Activated CD4-positive, alpha-beta T cell treated with anti-CD3 and anti-CD28 coated beads, Interleukin-2, amount 10 ng/mL, durations not matched to agents 24 days and 14 days (primary cell): ENCODE measurements at regions of chr16 and their contacts with region 1.

Region 1: GRCh38 chr16:68843482-68844210 is at the start of gene TANGO6:
- DNase-seq: peak; percentile 97
- H3K4me3 Mint-ChIP-seq: peak within 1 kb of the TSS; percentile 87
- H3K27ac Mint-ChIP-seq: peak within 1 kb of the TSS; percentile 95
- H3K4me1 Mint-ChIP-seq: peaks cover 20% of the 10 kb centered on the region
- H3K27me3 Mint-ChIP-seq: no peaks in the 10 kb centered on the region
- total RNA-seq, gene TANGO6: 35.6 and 40.0 TPM in 2 replicates

Region 2: GRCh38 chr16:68448360-68448970 is 395.2 kb before region 1 on chr16 and contains the start of gene SMPD3:
- intact Hi-C with region 1: loop called (anchors 5 kb)
- DNase-seq: peak; percentile 99
- H3K4me3 Mint-ChIP-seq: peak within 1 kb of the TSS; percentile 77
- H3K27ac Mint-ChIP-seq: peak within 1 kb of the TSS; percentile 60
- H3K4me1 Mint-ChIP-seq: peaks cover 11% of the 10 kb centered on the region
- H3K27me3 Mint-ChIP-seq: peaks cover 29% of the 10 kb centered on the region
- total RNA-seq, gene SMPD3: 0.09 and 0.40 TPM in 2 replicates

Region 3: GRCh38 chr16:68756250-68756915 is 87.3 kb before region 1 on chr16:
- intact Hi-C with region 1: loop called (anchors 2 kb)
- DNase-seq: peak; percentile 86
- H3K4me3 Mint-ChIP-seq: peak overlapping the region; percentile 45
- H3K27ac Mint-ChIP-seq: peak overlapping the region; percentile 99
- H3K4me1 Mint-ChIP-seq: peaks cover 54% of the 10 kb centered on the region
- H3K27me3 Mint-ChIP-seq: no peaks in the 10 kb centered on the region

Region 4: GRCh38 chr16:69123910-69124309 is 280.3 kb after region 1 on chr16:
- intact Hi-C with region 1: loop called (anchors 2 kb)
- DNase-seq: peak; percentile 90
- H3K4me3 Mint-ChIP-seq: no peak overlapping the region
- H3K27ac Mint-ChIP-seq: no peak overlapping the region
- H3K4me1 Mint-ChIP-seq: peaks cover 11% of the 10 kb centered on the region
- H3K27me3 Mint-ChIP-seq: no peaks in the 10 kb centered on the region

Region 5: DNA sequence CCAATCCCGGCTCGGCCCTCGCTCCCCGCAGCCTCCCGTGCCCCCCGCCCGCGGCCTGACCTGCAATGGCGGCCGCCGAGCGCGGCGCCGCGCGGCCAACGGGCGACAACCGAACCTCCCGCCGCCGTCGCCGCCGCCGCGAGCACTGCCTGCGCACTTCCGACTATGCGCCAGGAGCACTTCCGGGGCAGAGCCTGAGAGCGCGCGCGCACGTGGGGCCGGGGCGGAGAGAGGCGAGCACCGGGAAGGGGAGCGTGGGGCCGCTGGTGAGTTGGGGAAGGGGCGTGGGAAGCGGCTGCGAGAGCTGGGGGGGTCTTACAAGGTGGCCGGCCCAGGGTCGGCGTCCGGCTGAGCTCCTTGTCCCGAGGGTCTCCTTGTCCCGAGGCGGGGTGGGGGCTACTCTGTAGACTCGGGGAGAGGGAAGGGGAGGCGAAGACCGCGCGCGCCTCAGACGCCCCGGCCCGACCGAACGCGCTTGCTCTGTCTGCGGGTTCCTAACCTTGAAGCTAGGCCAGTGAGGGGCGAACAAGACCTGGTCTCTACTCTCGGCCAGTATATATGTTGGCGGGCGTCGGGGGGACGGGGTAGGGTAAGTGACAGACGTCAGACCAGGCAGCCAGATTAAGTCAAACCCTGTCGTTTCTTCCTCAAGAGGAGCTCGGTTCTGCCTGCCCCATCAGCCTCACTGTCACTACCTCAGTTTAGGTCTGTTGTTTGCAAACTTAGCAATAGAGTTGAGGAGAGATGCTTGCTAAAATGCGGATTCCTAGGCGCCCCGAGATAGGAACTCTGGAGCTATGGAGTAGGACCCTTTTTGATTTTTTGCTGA is 289.0 kb after region 1 on chr16 and contains the starts of genes CHTF8 and UTP4:
- intact Hi-C with region 1: loop called (anchors 2 kb)
- DNase-seq: peak; percentile 97
- H3K4me3 Mint-ChIP-seq: peak within 1 kb of the TSS; percentile 90
- H3K27ac Mint-ChIP-seq: peak within 1 kb of the TSS; percentile 93
- H3K4me1 Mint-ChIP-seq: peaks cover 50% of the 10 kb centered on the region
- H3K27me3 Mint-ChIP-seq: no peaks in the 10 kb centered on the region
- total RNA-seq, gene CHTF8: 124 and 138 TPM in 2 replicates
- total RNA-seq, gene UTP4: 126 and 131 TPM in 2 replicates

Region 6: DNA sequence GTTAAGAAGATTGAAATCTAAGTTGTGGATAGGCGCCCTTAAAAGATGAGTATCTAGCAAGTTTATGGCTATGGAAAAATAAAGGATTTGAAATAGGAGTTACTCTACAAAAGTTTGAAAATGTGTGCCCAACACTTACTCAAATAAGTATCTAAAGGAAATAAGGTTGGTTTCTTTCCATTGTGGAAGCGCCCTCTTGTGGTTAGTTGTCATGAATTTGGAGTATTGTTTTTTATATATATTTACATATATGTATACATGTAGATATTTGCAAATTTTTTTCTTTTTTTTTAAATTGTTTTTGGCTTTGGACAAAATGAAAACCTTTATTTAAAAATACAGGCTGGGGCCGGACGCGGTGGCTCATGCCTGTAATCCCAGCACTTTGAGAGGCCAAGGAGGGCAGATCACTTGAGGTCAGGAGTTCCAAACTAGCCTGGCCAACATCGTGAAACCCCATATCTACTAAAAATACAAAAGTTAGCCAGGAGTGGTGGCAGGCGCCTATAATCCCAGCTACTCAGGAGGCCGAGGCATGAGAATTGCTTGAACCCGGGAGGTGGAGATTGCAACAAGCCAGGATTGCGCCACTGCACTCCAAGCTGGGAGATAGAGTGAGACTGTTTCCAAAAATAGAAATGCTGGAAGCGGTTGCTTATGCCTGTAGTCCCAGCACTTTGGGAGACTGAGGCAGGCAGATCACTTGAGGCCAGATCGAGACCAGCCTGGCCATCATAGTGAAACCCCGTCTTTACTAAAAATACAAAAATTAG is 443.5 kb after region 1 on chr16:
- intact Hi-C with region 1: loop called (anchors 2 kb)
- DNase-seq: peak; percentile 84
- H3K4me3 Mint-ChIP-seq: no peak overlapping the region
- H3K27ac Mint-ChIP-seq: no peak overlapping the region
- H3K4me1 Mint-ChIP-seq: no peaks in the 10 kb centered on the region
- H3K27me3 Mint-ChIP-seq: no peaks in the 10 kb centered on the region

Region 7: DNA sequence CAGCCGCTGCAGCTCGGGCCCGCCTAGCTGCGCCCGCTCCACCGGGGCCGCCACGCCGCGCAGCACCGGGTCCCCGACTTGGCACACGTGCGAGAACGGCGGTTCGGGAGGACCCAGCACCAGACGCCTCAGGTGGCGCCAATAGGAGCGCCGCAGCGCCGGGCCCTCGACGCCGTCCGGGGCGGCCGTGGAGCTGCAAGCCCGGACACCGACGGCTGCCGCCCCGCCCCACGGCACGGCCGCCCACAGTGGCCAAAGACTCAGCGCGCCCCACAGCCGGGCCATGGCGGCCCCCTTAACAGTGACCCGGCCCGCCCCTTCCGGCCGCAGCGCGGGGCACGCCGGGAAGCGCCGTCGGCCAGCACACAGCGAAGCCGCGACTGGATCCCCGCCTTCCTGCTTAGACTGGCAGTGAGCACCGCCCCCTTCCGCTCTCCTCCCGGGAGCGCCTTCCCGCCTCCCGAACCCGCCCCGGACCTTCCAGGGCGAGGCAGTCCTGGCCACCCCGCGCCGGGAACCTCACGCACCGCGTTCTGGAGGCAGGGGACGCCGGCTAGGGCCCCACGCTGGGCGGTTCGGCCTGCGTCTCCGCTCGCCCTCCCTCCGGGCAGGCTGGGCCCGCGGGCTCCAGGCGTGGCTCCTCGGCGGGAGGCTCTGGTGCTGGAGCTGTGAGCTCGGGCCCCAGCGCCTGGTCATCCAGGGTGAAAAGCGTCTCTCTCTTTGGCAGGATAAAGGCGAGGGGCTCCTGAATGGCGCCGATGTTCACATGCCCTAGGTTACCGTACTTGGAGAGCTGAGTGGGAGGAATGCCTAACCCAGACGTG is 486.9 kb after region 1 on chr16 and contains the start of gene PDF:
- intact Hi-C with region 1: no loop called
- DNase-seq: peak; percentile 97
- H3K4me3 Mint-ChIP-seq: peak within 1 kb of the TSS; percentile 90
- H3K27ac Mint-ChIP-seq: peak within 1 kb of the TSS; percentile 89
- H3K4me1 Mint-ChIP-seq: peaks cover 32% of the 10 kb centered on the region
- H3K27me3 Mint-ChIP-seq: no peaks in the 10 kb centered on the region
- total RNA-seq, gene PDF: 18.2 and 21.9 TPM in 2 replicates